ENCODE measurements at regions of chr11 and their contacts with region 1.

Region 1: GRCh38 chr11:127919206-127920000 is 668.0 kb downstream of the ETS1 start:
- DNase-seq: no peak
- ATAC-seq: no peak
- H3K4me3 ChIP-seq: no peak overlapping the region
- H3K27ac ChIP-seq: no peak overlapping the region
- H3K4me1 ChIP-seq: no peaks in the 10 kb centered on the region
- H3K27me3 ChIP-seq: no peaks in the 10 kb centered on the region

Region 2: GRCh38 chr11:127966821-127967220 is 47.4 kb after region 1 on chr11:
- intact Hi-C with region 1: no loop called
- DNase-seq: no peak
- ATAC-seq: no peak
- H3K4me3 ChIP-seq: no peak overlapping the region
- H3K27ac ChIP-seq: no peak overlapping the region
- H3K4me1 ChIP-seq: no peaks in the 10 kb centered on the region
- H3K27me3 ChIP-seq: no peaks in the 10 kb centered on the region

Region 3: DNA sequence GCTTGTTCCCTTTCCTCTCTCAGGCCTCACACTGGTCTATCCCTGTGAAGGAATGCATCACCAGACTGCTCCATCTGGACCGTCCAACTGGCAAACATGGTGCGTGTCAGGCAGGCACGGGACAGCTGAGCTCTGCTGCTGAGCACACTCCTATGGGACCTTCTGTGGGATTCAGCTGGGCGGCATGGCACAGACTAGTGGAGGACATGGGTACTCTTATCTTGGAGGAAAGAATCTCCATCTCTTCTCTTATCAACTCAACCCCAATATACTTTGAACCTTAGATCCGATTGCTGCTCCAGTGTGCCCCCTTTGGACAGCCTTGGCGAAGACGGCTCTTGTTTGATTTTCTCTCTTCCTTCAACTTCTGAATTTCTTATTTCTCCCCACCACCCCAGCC is 74.4 kb after region 1 on chr11:
- intact Hi-C with region 1: loop called in 1 of 2 experiments (anchors 10 kb)
- DNase-seq: no peak
- ATAC-seq: peak; percentile 51
- H3K4me3 ChIP-seq: no peak overlapping the region
- H3K27ac ChIP-seq: no peak overlapping the region
- H3K4me1 ChIP-seq: no peaks in the 10 kb centered on the region
- H3K27me3 ChIP-seq: no peaks in the 10 kb centered on the region